B cell (primary cell): ENCODE measurements at regions of chr5 and their contacts with region 1.

Region 1: GRCh38 chr5:121962347-121962670 is 534 bp downstream of the SRFBP1 start:
- DNase-seq: no peak
- ATAC-seq: peak; percentile 12
- H3K4me3 ChIP-seq: peak overlapping the region; percentile 81 to 97 (median 85)
- H3K4me3 Mint-ChIP-seq: peak overlapping the region; percentile 94
- H3K27ac ChIP-seq: peak overlapping the region; percentile 80 to 89
- H3K27ac Mint-ChIP-seq: peak overlapping the region; percentile 95
- H3K4me1 ChIP-seq: peaks cover 16% of the 10 kb centered on the region in 2 donors
- H3K4me1 Mint-ChIP-seq: peaks cover 44% of the 10 kb centered on the region
- H3K27me3 ChIP-seq: no peaks in the 10 kb centered on the region
- H3K27me3 Mint-ChIP-seq: peaks cover 13% of the 10 kb centered on the region
- CTCF ChIP-seq: no peak

Region 2: GRCh38 chr5:120457839-120458507 is 1504.3 kb before region 1 on chr5:
- CTCF ChIA-PET with region 1: no interaction called
- POLR2A ChIA-PET with region 1: no interaction called
- intact Hi-C with region 1: loop called (anchors 2 kb)
- DNase-seq: peak; percentile 91
- ATAC-seq: peak; percentile 82
- H3K4me3 ChIP-seq: peak overlapping the region in 4 of 5 experiments; percentile 39 to 53 (median 45)
- H3K4me3 Mint-ChIP-seq: peak overlapping the region; percentile 82
- H3K27ac ChIP-seq: peak overlapping the region; percentile 81 to 84
- H3K27ac Mint-ChIP-seq: peak overlapping the region; percentile 88
- H3K4me1 ChIP-seq: peaks cover 5 to 8% of the 10 kb centered on the region in 2 donors
- H3K4me1 Mint-ChIP-seq: peaks cover 12% of the 10 kb centered on the region
- H3K27me3 ChIP-seq: peaks cover 0 to 2% (median 0%) of the 10 kb centered on the region in 4 experiments
- H3K27me3 Mint-ChIP-seq: no peaks in the 10 kb centered on the region
- CTCF ChIP-seq: peak; percentile 81

Region 3: GRCh38 chr5:121949867-121950266 is 12.4 kb before region 1 on chr5:
- CTCF ChIA-PET with region 1: interaction called, 16 read pairs
- POLR2A ChIA-PET with region 1: no interaction called
- intact Hi-C with region 1: no loop called
- DNase-seq: peak; percentile 29
- ATAC-seq: no peak
- H3K4me3 ChIP-seq: no peak overlapping the region
- H3K4me3 Mint-ChIP-seq: no peak overlapping the region
- H3K27ac ChIP-seq: no peak overlapping the region
- H3K27ac Mint-ChIP-seq: no peak overlapping the region
- H3K4me1 ChIP-seq: no peaks in the 10 kb centered on the region
- H3K4me1 Mint-ChIP-seq: no peaks in the 10 kb centered on the region
- H3K27me3 ChIP-seq: no peaks in the 10 kb centered on the region
- H3K27me3 Mint-ChIP-seq: peaks cover 22% of the 10 kb centered on the region
- CTCF ChIP-seq: peak; percentile 71

Region 4: DNA sequence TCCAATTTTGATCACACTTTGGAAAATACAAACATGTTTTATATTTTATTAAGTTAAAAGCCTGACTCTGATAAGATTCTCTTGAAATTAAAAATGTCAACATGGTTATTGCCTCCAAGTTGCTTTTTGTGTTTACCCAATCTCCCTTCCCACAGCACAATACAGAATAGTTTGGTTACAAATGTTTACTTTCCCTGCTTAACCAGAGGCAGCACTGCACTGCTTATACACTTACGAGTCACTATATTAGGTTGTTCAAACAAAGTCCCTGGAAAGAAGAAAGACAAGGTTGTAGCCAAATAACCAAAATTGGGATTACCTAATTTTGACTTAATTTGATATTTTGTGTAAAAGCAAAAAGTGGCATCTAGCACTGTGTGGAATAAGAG is 25.4 kb after region 1 on chr5:
- CTCF ChIA-PET with region 1: no interaction called
- POLR2A ChIA-PET with region 1: no interaction called
- intact Hi-C with region 1: no loop called
- DNase-seq: no peak
- ATAC-seq: no peak
- H3K4me3 ChIP-seq: no peak overlapping the region
- H3K4me3 Mint-ChIP-seq: no peak overlapping the region
- H3K27ac ChIP-seq: no peak overlapping the region
- H3K27ac Mint-ChIP-seq: no peak overlapping the region
- H3K4me1 ChIP-seq: no peaks in the 10 kb centered on the region
- H3K4me1 Mint-ChIP-seq: peaks cover 3% of the 10 kb centered on the region
- H3K27me3 ChIP-seq: no peaks in the 10 kb centered on the region
- H3K27me3 Mint-ChIP-seq: no peaks in the 10 kb centered on the region
- CTCF ChIP-seq: no peak